PC-9 (cell line): ENCODE measurements at regions of chr22 and their contacts with region 1.

Region 1: GRCh38 chr22:26642465-26643417 is 14.6 kb upstream of the MIAT start:
- DNase-seq: no peak
- H3K4me3 ChIP-seq: no peak overlapping the region
- H3K27ac ChIP-seq: no peak overlapping the region
- H3K4me1 ChIP-seq: no peaks in the 10 kb centered on the region
- H3K27me3 ChIP-seq: peaks cover 66% of the 10 kb centered on the region
- CTCF ChIP-seq: no peak

Region 2: DNA sequence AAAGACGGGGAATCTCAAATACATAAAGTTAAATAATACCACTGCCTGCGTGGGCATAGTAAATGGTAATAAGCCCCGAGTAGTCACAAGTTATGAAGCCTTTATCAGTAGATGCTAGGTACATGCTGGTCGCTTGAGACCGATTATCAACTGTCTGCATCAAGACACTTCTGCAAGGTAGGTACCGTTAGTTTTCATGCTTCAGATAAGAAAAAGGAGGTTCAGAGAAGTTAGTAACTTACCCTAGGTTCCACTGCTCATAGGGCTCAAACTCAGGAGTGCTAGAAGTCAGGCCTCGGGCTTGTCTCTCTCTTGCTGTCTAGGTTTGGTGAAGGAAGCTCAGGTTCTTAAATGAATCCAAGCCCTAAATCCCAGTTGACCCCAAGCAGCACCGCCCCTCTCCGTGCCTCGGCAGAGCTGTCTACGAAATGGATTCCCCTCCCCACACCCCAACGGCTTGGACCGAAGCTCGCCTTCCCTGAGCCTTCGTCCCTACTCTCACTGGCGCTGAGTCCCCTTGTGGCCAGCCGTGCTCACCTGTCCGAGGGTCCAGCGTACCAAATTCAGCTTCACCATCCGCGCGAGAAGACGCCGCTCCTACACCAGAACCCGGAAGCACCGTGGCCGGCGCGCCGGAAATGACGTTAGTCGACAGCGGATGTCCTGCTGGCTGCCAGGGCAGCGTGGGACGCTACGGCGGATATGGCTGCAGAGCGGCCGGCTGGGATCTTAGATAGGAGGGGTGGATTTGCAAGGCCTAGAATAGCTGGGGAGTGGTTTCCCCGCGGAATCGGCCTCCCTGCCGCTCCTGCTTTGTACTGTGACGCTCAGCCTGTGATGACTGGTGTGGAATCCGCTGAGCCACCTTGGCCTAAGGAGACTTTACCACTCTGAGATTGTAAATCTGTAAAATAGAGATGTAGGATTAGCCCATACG is 130.6 kb before region 1 on chr22 and contains the start of gene TFIP11:
- CTCF ChIA-PET with region 1: interaction called, 10 read pairs
- POLR2A ChIA-PET with region 1: no interaction called
- intact Hi-C with region 1: no loop called
- DNase-seq: peak; percentile 82 to 90
- H3K4me3 ChIP-seq: peak within 1 kb of the TSS; percentile 95
- H3K27ac ChIP-seq: peak within 1 kb of the TSS; percentile 44
- H3K4me1 ChIP-seq: peaks cover 15% of the 10 kb centered on the region
- H3K27me3 ChIP-seq: no peaks in the 10 kb centered on the region
- CTCF ChIP-seq: no peak
- total RNA-seq, gene TFIP11: 17.3 and 18.5 TPM in 2 replicates

Region 3: DNA sequence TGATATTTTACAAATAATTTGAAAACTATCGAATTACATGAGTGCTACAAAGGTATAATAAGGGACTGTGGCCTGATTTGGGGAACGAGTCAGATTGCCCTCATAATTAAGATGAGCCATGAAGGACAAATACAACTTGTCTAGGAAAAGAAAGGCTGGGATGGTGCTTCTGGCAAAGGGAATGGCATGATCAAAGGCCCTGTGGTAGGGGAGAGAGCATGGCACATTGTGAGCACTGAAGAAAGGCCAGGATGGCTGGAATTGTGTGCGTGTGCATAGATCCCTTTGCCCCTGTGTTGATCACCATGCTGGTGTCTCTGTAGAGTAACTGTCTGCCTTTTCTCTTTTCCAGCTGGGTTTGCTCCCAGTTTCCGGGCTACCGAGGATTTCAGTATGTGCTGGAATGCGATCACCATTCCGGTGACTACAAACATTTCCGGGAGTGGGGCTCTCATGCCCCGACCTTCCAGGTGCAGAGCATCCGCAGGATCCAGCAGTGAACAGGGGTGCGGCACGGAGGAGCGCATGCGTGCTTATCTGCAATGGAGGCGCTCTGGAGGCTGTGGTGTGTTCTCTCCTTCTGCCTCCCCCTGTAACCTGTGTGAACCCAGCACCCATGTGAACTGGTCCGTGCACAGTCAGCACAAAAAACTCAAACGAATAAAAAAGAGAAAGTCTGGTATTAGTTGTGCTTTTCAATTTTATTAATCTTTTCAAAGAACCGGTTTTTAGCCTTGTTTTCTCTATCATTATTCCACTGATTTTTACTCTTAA is 12.6 kb before region 1 on chr22:
- CTCF ChIA-PET with region 1: no interaction called
- POLR2A ChIA-PET with region 1: no interaction called
- intact Hi-C with region 1: no loop called
- DNase-seq: no peak
- H3K4me3 ChIP-seq: no peak overlapping the region
- H3K27ac ChIP-seq: no peak overlapping the region
- H3K4me1 ChIP-seq: no peaks in the 10 kb centered on the region
- H3K27me3 ChIP-seq: peaks cover 19% of the 10 kb centered on the region; the same call in 1 of the 2 replicates
- CTCF ChIP-seq: no peak

Region 4: DNA sequence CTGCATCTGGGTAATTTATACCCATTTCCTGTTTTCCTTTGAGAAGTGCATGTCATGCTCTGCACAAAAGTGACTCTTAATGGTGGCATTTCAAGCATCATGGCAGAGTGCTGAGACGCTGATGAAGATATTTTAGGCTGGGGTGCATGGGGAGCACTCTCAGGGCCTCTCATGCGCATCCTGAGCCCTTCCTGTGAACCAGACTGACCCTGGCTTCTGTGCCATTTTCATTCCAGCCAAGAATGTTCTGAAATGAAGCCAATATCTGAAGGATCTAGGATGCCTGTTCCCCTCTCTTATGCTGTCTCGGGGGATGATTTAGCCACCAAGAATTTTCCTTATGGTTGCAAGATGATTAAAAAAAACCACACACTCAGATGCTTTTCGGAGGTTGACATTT is 76.2 kb after region 1 on chr22:
- CTCF ChIA-PET with region 1: no interaction called
- POLR2A ChIA-PET with region 1: no interaction called
- intact Hi-C with region 1: no loop called
- DNase-seq: peak; percentile 1 to 21
- H3K4me3 ChIP-seq: no peak overlapping the region
- H3K27ac ChIP-seq: no peak overlapping the region
- H3K4me1 ChIP-seq: no peaks in the 10 kb centered on the region
- H3K27me3 ChIP-seq: no peaks in the 10 kb centered on the region
- CTCF ChIP-seq: no peak

Region 5: GRCh38 chr22:28188178-28188879 is 1545.6 kb after region 1 on chr22:
- CTCF ChIA-PET with region 1: interaction called, 21 read pairs
- POLR2A ChIA-PET with region 1: no interaction called
- intact Hi-C with region 1: no loop called
- DNase-seq: no peak
- H3K4me3 ChIP-seq: no peak overlapping the region
- H3K27ac ChIP-seq: no peak overlapping the region
- H3K4me1 ChIP-seq: no peaks in the 10 kb centered on the region
- H3K27me3 ChIP-seq: no peaks in the 10 kb centered on the region
- CTCF ChIP-seq: no peak